ENCODE measurements at regions of chr1 and their contacts with region 1.

Region 1: GRCh38 chr1:40232444-40232843 is 15.3 kb upstream of the TMCO2 start:
- DNase-seq: no peak
- H3K4me3 ChIP-seq: no peak overlapping the region
- CTCF ChIP-seq: no peak

Region 2: DNA sequence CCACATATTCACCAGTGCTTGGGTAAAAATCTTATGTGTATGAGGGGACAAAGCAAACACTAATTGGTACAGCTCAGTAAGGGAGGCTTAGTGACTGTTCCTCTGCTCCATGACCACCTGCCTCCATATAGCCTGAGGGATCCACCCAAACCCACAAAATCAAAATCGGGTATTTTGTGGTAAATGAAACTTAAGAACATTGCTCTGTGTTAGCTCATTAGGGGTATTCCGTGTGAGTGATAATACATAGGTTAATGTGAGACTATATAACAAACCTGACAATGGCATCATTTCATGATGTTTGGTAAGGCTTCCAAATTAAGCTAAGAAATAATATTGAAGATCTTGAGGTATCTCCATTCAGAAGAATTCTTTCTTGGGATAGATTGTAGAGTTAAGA is 58.8 kb after region 1 on chr1:
- in situ Hi-C with region 1: loop called (anchors 5 kb)
- DNase-seq: no peak
- H3K4me3 ChIP-seq: no peak overlapping the region
- CTCF ChIP-seq: no peak